Gastrocnemius medialis (tissue), 4 donors: ENCODE measurements at regions of chr10 and their contacts with region 1.

Region 1: DNA sequence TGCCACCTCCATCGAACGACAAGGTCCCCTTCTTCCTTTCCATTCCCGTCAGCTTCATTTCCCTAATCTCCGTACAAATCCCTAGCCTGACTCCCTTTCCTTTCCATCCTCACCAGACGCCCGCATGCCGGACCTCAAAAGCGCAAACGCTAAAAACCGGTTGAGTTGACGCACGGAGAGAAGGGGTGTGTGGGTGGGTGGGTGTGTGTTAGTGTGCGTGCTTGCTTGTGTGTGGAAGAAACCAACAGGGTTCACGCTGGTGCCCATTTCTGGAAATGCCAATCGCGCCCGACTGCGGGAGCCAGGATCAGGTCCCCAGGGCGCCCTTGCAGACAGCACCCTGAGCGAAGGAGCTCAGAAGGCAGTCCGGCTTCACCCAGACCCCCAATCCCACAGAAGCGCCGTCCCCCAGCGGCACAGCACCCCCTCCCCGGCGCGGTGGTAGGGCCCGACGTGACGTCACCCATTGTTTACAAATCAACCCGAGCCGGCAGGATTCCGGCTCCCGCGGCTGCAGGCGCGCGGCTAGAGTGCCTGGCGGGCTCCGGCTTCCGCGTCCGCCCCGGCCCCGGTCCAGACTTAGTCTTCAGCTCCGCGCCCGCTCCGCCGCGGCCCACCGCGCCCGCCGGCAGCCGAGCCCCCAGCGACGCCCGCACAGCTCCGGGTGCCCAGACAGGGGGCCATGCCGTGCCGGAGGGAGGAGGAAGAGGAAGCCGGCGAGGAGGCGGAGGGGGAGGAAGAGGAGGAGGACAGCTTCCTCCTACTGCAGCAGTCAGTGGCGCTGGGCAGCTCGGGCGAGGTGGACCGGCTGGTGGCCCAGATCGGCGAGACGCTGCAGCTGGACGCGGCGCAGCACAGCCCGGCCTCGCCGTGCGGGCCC is at the start of gene FRAT1:
- DNase-seq: peak; percentile 76 to 80
- ATAC-seq: peak; percentile 91 to 94
- H3K4me3 ChIP-seq: peak within 1 kb of the TSS; percentile 74 to 88 (median 79)
- H3K27ac ChIP-seq: peak within 1 kb of the TSS; percentile 93 to 97 (median 96)
- H3K4me1 ChIP-seq: peaks cover 18 to 19% of the 10 kb centered on the region in 2 donors
- H3K27me3 ChIP-seq: no peaks in the 10 kb centered on the region
- CTCF ChIP-seq: no peak
- POLR2A ChIP-seq: peak; percentile 81 to 92
- total RNA-seq, gene FRAT1: 1.7 to 7.6 (median 3.2) TPM

Region 2: DNA sequence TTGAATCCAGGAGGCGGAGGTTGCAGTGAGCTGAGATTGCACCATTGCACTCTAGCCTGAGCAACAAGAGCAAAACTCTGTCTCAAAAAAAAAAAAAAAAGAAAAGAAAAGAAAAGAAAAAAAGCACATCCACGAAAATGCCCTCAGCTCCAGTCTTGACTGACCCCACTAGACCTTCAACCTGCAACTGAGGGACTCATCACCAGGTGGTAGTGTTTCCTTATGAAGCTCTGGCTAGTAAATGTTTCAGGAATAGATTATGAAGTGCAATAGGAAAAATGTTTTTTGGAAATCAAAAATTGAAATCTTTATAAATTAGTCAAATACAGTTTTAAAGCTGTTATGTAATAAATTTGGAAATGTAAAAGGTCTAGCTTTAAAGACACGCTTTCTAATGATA is 827.7 kb before region 1 on chr10:
- in situ Hi-C with region 1: no loop called
- intact Hi-C with region 1: no loop called
- DNase-seq: no peak
- ATAC-seq: no peak
- H3K4me3 ChIP-seq: no peak overlapping the region
- H3K27ac ChIP-seq: no peak overlapping the region
- H3K4me1 ChIP-seq: no peaks in the 10 kb centered on the region
- H3K27me3 ChIP-seq: no peaks in the 10 kb centered on the region
- CTCF ChIP-seq: peak in 3 of 5 experiments; percentile 16 to 39 (median 22)
- POLR2A ChIP-seq: no peak

Region 3: GRCh38 chr10:97096261-97097083 is 222.5 kb before region 1 on chr10:
- in situ Hi-C with region 1: no loop called
- intact Hi-C with region 1: no loop called
- DNase-seq: peak in 1 of 2 donors; percentile 16
- ATAC-seq: peak; percentile 30 to 70
- H3K4me3 ChIP-seq: peak overlapping the region in 3 of 4 donors; percentile 15 to 38 (median 22)
- H3K27ac ChIP-seq: peak overlapping the region in 3 of 4 donors; percentile 15 to 41 (median 41)
- H3K4me1 ChIP-seq: peaks cover 15 to 18% of the 10 kb centered on the region in 2 donors
- H3K27me3 ChIP-seq: no peaks in the 10 kb centered on the region
- CTCF ChIP-seq: no peak
- POLR2A ChIP-seq: no peak

Region 4: GRCh38 chr10:97292097-97292862 is 26.7 kb before region 1 on chr10 and contains the start of gene ARHGAP19:
- in situ Hi-C with region 1: no loop called
- intact Hi-C with region 1: loop called (anchors 1 kb)
- DNase-seq: peak; percentile 97
- ATAC-seq: peak; percentile 100
- H3K4me3 ChIP-seq: peak within 1 kb of the TSS; percentile 79 to 97 (median 87)
- H3K27ac ChIP-seq: peak within 1 kb of the TSS; percentile 87 to 95 (median 88)
- H3K4me1 ChIP-seq: peaks cover 9 to 10% of the 10 kb centered on the region in 2 donors
- H3K27me3 ChIP-seq: no peaks in the 10 kb centered on the region
- CTCF ChIP-seq: no peak
- POLR2A ChIP-seq: peak; percentile 38 to 66
- total RNA-seq, gene ARHGAP19: 1.7 to 12.3 (median 2.4) TPM